Left cardiac atrium (tissue), 4 donors: ENCODE measurements at regions of chr10 and their contacts with region 1.

Region 1: DNA sequence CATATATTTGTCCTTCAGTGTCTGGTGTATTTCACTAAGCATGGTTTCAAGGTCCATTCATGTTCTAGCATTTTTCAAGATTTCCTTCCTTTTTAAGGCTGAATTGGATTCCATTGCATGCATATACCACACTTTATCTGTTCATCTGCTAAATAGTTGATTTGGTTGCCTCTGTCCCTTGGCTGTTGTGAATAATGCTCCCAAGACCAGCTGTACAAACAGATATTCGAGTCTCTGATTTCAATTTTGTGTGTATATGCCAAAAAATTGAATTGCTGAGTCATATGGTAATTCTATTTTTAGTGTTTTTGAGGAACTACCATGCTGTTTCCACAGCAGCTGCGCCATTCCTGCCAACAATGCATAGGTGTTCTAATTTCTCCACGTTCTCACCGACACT is 216.4 kb downstream of the NRG3 start:
- DNase-seq: no peak
- ATAC-seq: no peak

Region 2: GRCh38 chr10:82148764-82149163 is 57.4 kb after region 1 on chr10:
- intact Hi-C with region 1: loop called in 1 of 2 experiments (anchors 5 kb)
- DNase-seq: no peak
- ATAC-seq: no peak